ENCODE measurements at regions of chr14 and their contacts with region 1.

Region 1: DNA sequence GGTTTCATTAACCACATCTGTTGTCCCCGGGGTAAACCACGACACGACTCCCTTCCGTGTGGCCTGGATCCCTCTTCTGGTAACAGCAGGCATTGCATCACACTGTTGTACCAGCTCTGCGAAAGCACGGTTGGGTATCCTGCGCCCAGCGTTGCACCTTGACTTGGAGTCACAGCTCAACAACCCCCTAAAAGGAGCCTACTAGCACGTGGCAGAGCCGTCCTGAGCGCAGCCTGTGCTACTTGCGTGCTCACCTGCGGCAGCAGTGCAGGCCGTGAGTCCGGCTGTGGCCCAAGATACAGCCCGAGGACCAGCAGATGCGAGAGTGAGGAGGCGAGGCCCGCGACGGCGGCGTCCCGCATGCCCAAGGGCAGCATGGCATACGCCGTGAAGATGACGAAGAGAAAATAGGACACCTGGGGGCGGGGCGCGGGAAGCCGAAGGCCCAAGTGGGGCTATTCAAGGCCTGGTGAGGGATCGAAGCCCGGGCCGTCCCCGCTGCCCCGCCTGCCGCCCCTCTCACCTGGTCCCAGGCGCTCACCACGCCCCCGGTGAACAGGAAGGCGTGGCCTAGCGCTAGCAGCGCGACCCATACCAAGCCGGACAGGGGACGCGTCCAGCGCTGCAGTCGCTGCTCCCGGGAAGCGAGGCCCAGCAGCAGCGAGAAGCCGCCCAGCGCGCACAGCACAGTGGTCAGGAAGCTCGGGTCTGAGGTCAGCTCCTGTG is 2.4 kb downstream of the ADCY4 start:
- DNase-seq: peak; percentile 63
- ATAC-seq: peak; percentile 95
- H3K4me3 Mint-ChIP-seq: peak overlapping the region; percentile 83
- H3K27ac Mint-ChIP-seq: peak overlapping the region; percentile 42
- H3K4me1 Mint-ChIP-seq: peaks cover 39% of the 10 kb centered on the region
- H3K27me3 Mint-ChIP-seq: peaks cover 14% of the 10 kb centered on the region
- CTCF ChIP-seq: no peak

Region 2: GRCh38 chr14:24411443-24412389 is 79.3 kb after region 1 on chr14:
- CTCF ChIA-PET with region 1: interaction called, 7 read pairs
- POLR2A ChIA-PET with region 1: no interaction called
- intact Hi-C with region 1: loop called (anchors 1 kb)
- DNase-seq: no peak
- ATAC-seq: peak; percentile 81
- H3K4me3 Mint-ChIP-seq: no peak overlapping the region
- H3K27ac Mint-ChIP-seq: no peak overlapping the region
- H3K4me1 Mint-ChIP-seq: no peaks in the 10 kb centered on the region
- H3K27me3 Mint-ChIP-seq: peaks cover 14% of the 10 kb centered on the region
- CTCF ChIP-seq: no peak

Region 3: DNA sequence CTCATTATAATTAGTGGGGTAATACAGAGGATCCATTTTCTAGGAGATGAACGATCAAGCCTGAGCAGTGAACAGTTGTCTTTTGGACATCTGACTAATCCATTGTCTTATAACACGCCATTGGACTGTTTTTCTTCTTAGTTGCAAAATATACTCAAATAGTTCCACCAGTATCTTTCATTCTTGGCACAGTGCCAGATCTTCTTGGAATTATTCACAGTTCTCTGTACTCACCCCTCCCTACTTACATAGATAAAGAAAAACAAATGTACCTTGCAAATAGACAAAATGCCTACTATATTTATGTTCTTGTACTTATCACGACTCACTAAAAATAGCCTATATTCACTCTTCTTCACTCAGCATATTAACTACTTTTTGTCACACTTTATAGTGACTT is 93.3 kb after region 1 on chr14:
- CTCF ChIA-PET with region 1: interaction called, 353 read pairs
- POLR2A ChIA-PET with region 1: interaction called, 216 read pairs
- intact Hi-C with region 1: no loop called
- DNase-seq: no peak
- ATAC-seq: no peak
- H3K4me3 Mint-ChIP-seq: no peak overlapping the region
- H3K27ac Mint-ChIP-seq: no peak overlapping the region
- H3K4me1 Mint-ChIP-seq: peaks cover 10% of the 10 kb centered on the region
- H3K27me3 Mint-ChIP-seq: no peaks in the 10 kb centered on the region
- CTCF ChIP-seq: no peak

Measured in activated B cell treated with CpG ODN at 0.5 μM for 24 hours (primary cell).